RWPE1 (cell line): ENCODE measurements at regions of chr19 and their contacts with region 1.

Region 1: GRCh38 chr19:48708471-48709106 is 10.9 kb downstream of the MAMSTR start:
- DNase-seq: no peak
- H3K27ac ChIP-seq: no peak overlapping the region
- CTCF ChIP-seq: no peak

Region 2: GRCh38 chr19:48575931-48576622 is 132.5 kb before region 1 on chr19:
- CTCF ChIA-PET with region 1: no interaction called
- POLR2A ChIA-PET with region 1: no interaction called
- DNase-seq: no peak
- H3K27ac ChIP-seq: no peak overlapping the region
- CTCF ChIP-seq: no peak

Region 3: DNA sequence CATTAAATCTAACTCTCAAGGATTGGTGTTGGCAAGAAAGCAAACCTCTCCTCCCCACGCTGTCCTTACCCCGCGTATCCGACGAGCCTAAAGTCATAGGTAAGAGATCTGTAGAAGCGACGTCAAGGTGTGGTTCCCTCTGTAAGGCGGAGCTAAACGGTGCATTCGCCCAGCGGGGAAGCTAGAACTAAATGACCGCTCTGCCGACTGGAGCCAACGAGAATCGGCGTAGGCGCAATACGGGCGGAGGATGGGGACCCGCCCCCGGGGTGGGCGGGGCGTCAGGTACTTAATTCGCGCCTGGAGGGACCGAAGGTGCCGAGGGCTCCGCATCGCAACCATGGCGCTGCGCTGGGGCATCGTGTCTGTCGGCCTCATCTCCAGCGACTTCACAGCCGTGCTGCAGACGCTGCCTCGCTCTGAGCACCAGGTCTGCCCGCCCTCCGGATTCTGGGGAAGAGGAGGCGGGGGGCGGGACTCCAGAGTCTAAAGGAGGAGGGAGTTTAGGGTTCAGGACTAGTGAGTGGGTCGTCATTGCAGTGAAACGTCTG is 224.9 kb after region 1 on chr19 and contains the start of gene DHDH:
- CTCF ChIA-PET with region 1: interaction called, 13 read pairs
- POLR2A ChIA-PET with region 1: no interaction called
- DNase-seq: peak; percentile 87
- H3K27ac ChIP-seq: peak within 1 kb of the TSS; percentile 57
- CTCF ChIP-seq: no peak